ENCODE measurements at regions of chr7 and their contacts with region 1.

Region 1: GRCh38 chr7:992709-993607 is 10.0 kb downstream of the CYP2W1 start:
- DNase-seq: peak; percentile 96
- ATAC-seq: peak; percentile 98
- H3K4me3 Mint-ChIP-seq: no peak overlapping the region
- H3K27ac Mint-ChIP-seq: no peak overlapping the region
- H3K4me1 Mint-ChIP-seq: peaks cover 5% of the 10 kb centered on the region
- H3K27me3 Mint-ChIP-seq: no peaks in the 10 kb centered on the region
- CTCF ChIP-seq: peak; percentile 97

Region 2: GRCh38 chr7:909358-910329 is 83.3 kb before region 1 on chr7:
- CTCF ChIA-PET with region 1: interaction called, 10 read pairs
- POLR2A ChIA-PET with region 1: no interaction called
- intact Hi-C with region 1: no loop called
- DNase-seq: no peak
- ATAC-seq: no peak
- H3K4me3 Mint-ChIP-seq: peak overlapping the region; percentile 41
- H3K27ac Mint-ChIP-seq: no peak overlapping the region
- H3K4me1 Mint-ChIP-seq: peaks cover 14% of the 10 kb centered on the region
- H3K27me3 Mint-ChIP-seq: no peaks in the 10 kb centered on the region
- CTCF ChIP-seq: no peak

Region 3: DNA sequence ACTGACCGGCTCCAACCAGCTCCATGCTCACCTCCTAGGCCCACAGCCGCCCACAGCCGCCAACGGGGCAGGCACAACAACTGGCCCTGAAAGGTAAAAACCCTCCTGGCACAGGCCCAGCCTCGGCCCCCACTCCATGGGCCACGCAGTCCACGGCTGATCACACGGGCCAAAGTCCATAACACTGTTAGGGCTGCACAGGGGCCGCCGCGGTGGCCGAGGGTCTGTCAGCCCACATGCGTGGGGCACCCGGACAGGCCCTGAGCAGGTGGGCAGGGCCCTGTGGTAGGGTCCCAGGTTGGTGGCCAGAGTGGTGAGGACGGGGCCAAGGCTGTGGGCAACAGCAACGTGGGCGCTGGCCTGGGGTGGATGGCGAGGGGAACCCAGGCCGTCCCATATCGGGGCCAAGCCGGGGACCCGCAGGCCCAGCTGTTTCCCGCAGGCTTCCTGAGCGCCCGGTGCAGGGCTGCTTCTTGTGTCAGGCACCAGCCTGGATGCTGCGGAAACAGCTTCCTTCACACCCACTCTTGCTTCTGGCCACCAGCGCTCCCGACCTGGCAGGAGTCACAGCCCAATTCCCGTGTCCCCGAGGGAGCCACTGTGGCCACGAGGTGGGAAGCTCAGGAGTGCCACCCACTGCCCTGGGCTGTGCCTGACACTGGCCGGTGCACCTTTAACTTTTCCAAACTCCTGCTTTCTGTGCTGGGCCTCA is 19.2 kb after region 1 on chr7:
- CTCF ChIA-PET with region 1: interaction called, 11 read pairs
- POLR2A ChIA-PET with region 1: no interaction called
- intact Hi-C with region 1: no loop called
- DNase-seq: no peak
- ATAC-seq: peak; percentile 15
- H3K4me3 Mint-ChIP-seq: no peak overlapping the region
- H3K27ac Mint-ChIP-seq: no peak overlapping the region
- H3K4me1 Mint-ChIP-seq: peaks cover 12% of the 10 kb centered on the region
- H3K27me3 Mint-ChIP-seq: no peaks in the 10 kb centered on the region
- CTCF ChIP-seq: no peak

Region 4: GRCh38 chr7:1059200-1060091 is 66.5 kb after region 1 on chr7:
- CTCF ChIA-PET with region 1: interaction called, 204 read pairs
- POLR2A ChIA-PET with region 1: interaction called, 13 read pairs
- intact Hi-C with region 1: no loop called
- DNase-seq: peak; percentile 30
- ATAC-seq: peak; percentile 63
- H3K4me3 Mint-ChIP-seq: no peak overlapping the region
- H3K27ac Mint-ChIP-seq: no peak overlapping the region
- H3K4me1 Mint-ChIP-seq: peaks cover 15% of the 10 kb centered on the region
- H3K27me3 Mint-ChIP-seq: no peaks in the 10 kb centered on the region
- CTCF ChIP-seq: no peak

Region 5: DNA sequence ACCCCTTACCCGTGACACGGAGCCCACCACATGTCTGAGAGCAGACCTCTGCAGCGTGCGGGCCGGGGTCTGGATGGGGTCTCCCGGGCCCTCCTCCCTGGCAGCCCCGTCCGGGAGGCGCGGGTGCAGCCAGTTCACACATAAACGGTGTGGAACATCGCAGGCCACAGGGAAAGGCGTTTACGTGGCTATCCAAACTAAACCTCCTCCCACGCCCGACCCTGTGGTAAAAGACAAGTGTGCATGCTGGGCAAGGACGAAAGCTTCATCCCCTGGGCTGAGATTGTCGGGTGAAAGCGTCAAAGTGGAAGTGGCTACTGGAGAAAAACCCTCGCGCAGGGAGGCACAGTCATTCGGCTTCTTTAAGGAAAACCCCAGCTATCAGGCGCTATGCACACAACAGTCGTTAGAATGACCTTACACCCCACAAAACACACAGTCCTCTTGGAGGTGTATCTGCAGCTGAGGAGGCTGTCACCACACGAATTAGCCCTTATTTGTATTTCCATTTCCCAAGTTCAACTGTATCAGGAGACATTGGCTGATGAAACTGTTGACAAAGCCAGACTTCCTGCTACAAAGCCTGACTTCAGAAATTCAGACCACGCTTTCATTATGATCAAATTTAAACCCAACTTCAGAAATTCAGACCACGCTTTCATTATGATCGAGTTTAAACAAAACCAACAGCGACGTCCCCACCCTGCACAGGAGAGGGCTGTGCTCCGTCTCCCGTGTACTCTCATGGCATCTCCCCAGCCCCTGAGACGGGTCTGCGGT is 110.2 kb after region 1 on chr7:
- CTCF ChIA-PET with region 1: interaction called, 12 read pairs
- POLR2A ChIA-PET with region 1: no interaction called
- intact Hi-C with region 1: no loop called
- DNase-seq: peak; percentile 60
- ATAC-seq: peak; percentile 85
- H3K4me3 Mint-ChIP-seq: peak overlapping the region; percentile 43
- H3K27ac Mint-ChIP-seq: peak overlapping the region; percentile 77
- H3K4me1 Mint-ChIP-seq: peaks cover 20% of the 10 kb centered on the region
- H3K27me3 Mint-ChIP-seq: no peaks in the 10 kb centered on the region
- CTCF ChIP-seq: no peak

Region 6: DNA sequence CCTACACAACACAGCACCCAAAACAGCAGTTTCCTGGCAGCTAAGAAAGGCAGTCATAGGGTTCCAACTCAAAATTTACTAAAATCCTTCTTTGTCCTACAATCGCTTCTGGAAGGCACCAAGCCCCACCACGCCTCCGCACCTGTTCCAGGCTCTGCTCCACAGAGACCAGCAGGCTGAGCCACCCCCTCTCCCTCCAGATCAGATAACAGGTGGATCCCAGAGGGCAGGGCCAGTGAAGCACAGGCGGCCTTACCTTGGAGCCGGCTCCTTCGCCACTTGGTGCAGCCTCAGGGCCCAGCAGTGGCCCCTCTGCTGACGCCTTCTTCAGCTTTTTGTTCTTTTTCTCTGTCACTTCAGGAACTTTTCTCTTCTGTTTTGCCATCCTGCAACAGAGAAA is 134.0 kb after region 1 on chr7:
- CTCF ChIA-PET with region 1: no interaction called
- POLR2A ChIA-PET with region 1: no interaction called
- intact Hi-C with region 1: no loop called
- DNase-seq: no peak
- ATAC-seq: no peak
- H3K4me3 Mint-ChIP-seq: no peak overlapping the region
- H3K27ac Mint-ChIP-seq: no peak overlapping the region
- H3K4me1 Mint-ChIP-seq: no peaks in the 10 kb centered on the region
- H3K27me3 Mint-ChIP-seq: no peaks in the 10 kb centered on the region
- CTCF ChIP-seq: no peak

Region 7: GRCh38 chr7:1175967-1176851 is 183.3 kb after region 1 on chr7:
- CTCF ChIA-PET with region 1: interaction called, 87 read pairs
- POLR2A ChIA-PET with region 1: interaction called, 4 read pairs
- intact Hi-C with region 1: no loop called
- DNase-seq: peak; percentile 92
- ATAC-seq: peak; percentile 80
- H3K4me3 Mint-ChIP-seq: peak overlapping the region; percentile 60
- H3K27ac Mint-ChIP-seq: peak overlapping the region; percentile 88
- H3K4me1 Mint-ChIP-seq: peaks cover 15% of the 10 kb centered on the region
- H3K27me3 Mint-ChIP-seq: peaks cover 14% of the 10 kb centered on the region
- CTCF ChIP-seq: peak; percentile 94

Region 8: DNA sequence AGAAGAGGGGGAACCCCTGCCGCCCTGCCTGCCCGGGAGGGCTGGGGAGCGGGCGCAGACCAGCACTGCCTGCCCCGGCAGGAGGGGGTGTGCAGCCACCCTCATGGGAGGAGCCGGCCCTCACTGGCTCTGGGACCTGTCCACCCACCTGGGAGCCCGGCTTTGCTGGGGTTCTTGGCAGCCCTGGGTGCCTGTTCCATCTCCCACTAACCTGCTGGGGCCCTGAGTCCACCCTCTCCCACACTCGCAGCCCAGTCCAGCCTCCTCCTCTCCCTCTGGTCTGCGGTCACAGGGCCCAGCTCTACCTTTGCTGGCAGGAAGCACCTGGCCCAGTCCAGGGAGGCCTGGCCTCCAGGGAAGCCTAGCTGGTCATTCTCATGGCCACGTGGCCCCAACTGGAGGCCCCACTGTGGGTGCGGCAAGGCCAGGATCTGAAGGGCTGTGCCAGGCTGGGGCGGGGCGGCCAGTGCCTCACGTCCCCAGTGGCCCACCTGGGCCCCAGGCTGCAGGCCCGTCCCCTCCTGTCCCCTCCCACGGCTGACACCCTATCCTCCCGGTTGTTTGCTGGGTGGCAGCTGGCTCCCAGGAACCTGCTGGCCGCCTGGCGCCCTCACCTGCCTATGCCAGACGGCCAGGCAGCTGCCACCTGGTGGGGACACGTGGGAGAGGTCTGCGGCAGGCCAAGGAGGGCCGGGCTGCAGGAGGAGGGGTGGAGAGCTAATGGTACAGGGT is 563.0 kb after region 1 on chr7 and contains the start of gene TMEM184A:
- CTCF ChIA-PET with region 1: no interaction called
- POLR2A ChIA-PET with region 1: no interaction called
- intact Hi-C with region 1: no loop called
- DNase-seq: peak; percentile 65
- ATAC-seq: peak; percentile 88
- H3K4me3 Mint-ChIP-seq: no peak within 1 kb of the TSS
- H3K27ac Mint-ChIP-seq: no peak within 1 kb of the TSS
- H3K4me1 Mint-ChIP-seq: no peaks in the 10 kb centered on the region
- H3K27me3 Mint-ChIP-seq: no peaks in the 10 kb centered on the region
- CTCF ChIP-seq: peak; percentile 56
- total RNA-seq, gene TMEM184A: not detected

Measured in activated CD8-positive, alpha-beta T cell treated with anti-CD3 and anti-CD28 coated beads for 36 hours (primary cell).